GM12878 (cell line): ENCODE measurements at regions of chr1 and their contacts with region 1.

Region 1: DNA sequence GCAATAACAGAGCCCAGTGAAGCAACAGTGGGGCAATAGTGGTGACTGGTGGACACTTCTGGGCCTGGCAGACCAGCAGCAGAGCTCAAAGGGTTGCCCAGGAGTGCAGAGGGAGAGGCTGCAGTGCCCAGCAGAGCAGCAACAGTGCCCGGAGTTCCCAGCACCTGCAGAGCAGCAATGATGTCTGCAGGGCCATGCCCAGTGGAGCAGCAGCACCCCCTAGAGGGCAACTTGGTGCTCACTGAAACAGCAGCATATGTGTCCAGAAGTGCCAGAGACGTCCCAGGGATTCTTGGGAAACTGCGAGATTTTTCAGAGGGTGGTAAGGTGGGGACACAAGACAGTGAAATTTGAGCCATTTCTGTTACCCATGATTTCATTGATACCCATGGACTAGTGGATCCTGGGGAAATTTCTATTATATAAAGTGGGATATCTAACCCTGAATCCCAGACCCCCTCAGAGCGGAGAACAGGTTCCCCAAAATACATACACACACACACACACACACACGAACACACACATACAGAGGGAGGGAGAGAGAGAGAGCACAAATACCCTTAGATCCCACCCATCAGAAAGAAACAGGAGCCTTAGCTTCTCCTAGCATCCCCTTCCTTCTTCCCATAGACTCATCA is 156.9 kb upstream of the GJB5 start:
- DNase-seq: peak; percentile 41
- ATAC-seq: peak; percentile 96
- H3K4me3 ChIP-seq: no peak overlapping the region
- H3K27ac ChIP-seq: no peak overlapping the region
- H3K4me1 ChIP-seq: no peaks in the 10 kb centered on the region
- H3K27me3 ChIP-seq: no peaks in the 10 kb centered on the region
- CTCF ChIP-seq: peak; percentile 95 to 96 (median 96)
- EP300 ChIP-seq: no peak
- POLR2A ChIP-seq: no peak
- RAD21 ChIP-seq: peak; percentile 94

Region 2: DNA sequence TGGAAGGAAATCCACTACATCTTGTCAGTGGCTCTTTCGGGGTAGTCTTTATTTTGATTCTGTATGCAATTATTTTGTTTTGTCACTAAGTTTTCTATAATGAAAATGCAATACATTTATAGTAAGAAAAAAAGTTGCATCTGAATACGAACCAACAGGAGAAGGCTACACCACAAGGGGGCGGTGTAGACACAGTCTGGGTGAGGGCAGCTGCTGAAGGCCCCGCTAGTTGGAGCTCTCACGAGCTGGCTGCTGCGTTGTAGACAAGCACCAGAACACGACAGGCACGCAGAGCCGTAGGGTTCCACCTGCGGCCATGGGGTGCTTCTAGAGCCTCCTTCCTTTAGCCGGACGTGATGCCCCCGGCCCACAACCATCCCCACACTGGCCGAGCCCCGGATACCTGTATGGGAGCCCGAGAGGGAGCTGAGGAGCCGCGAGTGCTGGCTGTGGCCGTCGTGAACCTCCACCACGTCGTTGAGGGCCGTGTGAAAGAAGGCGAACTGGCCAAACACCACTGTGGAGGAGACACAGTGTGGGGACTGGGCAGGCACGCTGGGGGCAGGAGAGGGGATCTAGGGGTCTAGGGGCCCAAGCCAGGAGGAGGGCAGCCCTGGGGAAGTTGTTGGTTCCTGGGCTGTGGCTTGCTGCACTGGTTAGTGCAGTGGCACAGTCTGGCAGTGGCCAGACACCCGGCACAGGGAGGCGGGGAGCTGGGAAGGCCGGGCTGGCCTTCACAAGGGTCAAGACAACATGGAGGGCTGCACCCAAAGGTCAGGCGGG is 964.8 kb before region 1 on chr1:
- CTCF ChIA-PET with region 1: interaction called, 18 read pairs
- POLR2A ChIA-PET with region 1: no interaction called
- RAD21 ChIA-PET with region 1: interaction called, 3 read pairs
- SMC1A ChIA-PET with region 1: interaction called, 3 read pairs
- in situ Hi-C with region 1: loop called (anchors 10 kb)
- intact Hi-C with region 1: loop called (anchors 2 kb)
- DNase-seq: peak; percentile 24
- ATAC-seq: peak; percentile 97
- H3K4me3 ChIP-seq: no peak overlapping the region
- H3K27ac ChIP-seq: no peak overlapping the region
- H3K4me1 ChIP-seq: no peaks in the 10 kb centered on the region
- H3K27me3 ChIP-seq: peaks cover 0 to 4% of the 10 kb centered on the region in 2 experiments; a peak in 2 of 4 replicates
- CTCF ChIP-seq: peak; percentile 99; a peak in 5 of 6 replicates
- EP300 ChIP-seq: no peak
- POLR2A ChIP-seq: no peak
- RAD21 ChIP-seq: peak; percentile 64

Region 3: DNA sequence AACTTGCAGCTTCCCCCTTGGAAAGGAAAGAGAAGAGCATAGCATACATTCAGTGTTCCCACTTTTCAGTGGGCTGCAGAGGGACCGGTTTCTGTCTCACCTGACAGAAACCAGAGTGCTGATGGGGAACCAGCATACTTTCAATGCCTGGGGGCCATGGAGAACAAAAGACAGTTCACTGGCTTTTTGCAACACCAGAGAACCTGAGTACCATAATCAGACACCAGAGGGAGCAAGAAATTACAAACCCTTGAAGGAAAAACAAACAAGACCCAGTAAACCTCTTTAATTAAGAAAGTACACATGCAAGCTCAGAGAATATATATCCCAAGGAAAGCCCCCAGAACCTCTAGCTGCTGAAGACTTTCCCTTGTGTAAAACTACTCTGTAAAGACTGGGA is 484.1 kb before region 1 on chr1:
- CTCF ChIA-PET with region 1: interaction called, 21 read pairs
- POLR2A ChIA-PET with region 1: no interaction called
- RAD21 ChIA-PET with region 1: no interaction called
- SMC1A ChIA-PET with region 1: no interaction called
- in situ Hi-C with region 1: no loop called
- intact Hi-C with region 1: no loop called
- DNase-seq: no peak
- ATAC-seq: no peak
- H3K4me3 ChIP-seq: no peak overlapping the region
- H3K27ac ChIP-seq: no peak overlapping the region
- H3K4me1 ChIP-seq: no peaks in the 10 kb centered on the region; the same call in 1 of the 2 replicates
- H3K27me3 ChIP-seq: no peaks in the 10 kb centered on the region
- CTCF ChIP-seq: peak; percentile 31 to 41 (median 39); a peak in 4 of 6 replicates
- EP300 ChIP-seq: no peak
- POLR2A ChIP-seq: no peak
- RAD21 ChIP-seq: peak; percentile 37

Region 4: DNA sequence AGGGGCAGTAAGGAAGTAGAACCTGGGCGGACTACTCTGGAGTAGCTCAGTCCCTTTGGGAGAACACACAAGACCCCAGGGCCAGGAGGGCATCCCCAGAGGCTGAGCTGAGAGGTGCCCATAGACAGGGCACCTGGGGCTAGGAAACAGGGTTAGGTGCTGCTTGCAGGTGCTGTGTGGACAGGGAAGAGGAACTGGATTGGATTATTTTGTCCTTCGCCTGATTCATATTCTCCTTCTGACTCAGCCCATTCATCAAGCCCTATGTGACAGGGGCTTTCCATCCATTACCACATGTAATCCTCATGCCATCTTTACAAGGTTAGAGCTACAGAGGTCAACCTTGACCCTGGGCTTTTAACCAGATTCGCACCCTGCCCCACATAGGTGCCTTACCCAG is 237.4 kb before region 1 on chr1:
- CTCF ChIA-PET with region 1: interaction called, 3 read pairs
- POLR2A ChIA-PET with region 1: no interaction called
- RAD21 ChIA-PET with region 1: no interaction called
- SMC1A ChIA-PET with region 1: interaction called, 3 read pairs
- in situ Hi-C with region 1: no loop called
- intact Hi-C with region 1: loop called (anchors 10 kb)
- DNase-seq: peak; percentile 84
- ATAC-seq: peak; percentile 83
- H3K4me3 ChIP-seq: no peak overlapping the region
- H3K27ac ChIP-seq: peak overlapping the region; percentile 49
- H3K4me1 ChIP-seq: peaks cover 30% of the 10 kb centered on the region
- H3K27me3 ChIP-seq: no peaks in the 10 kb centered on the region
- CTCF ChIP-seq: no peak
- EP300 ChIP-seq: peak; percentile 81 to 97
- POLR2A ChIP-seq: no peak
- RAD21 ChIP-seq: no peak

Region 5: GRCh38 chr1:34460193-34460592 is 137.8 kb before region 1 on chr1:
- CTCF ChIA-PET with region 1: interaction called, 311 read pairs
- POLR2A ChIA-PET with region 1: interaction called, 3 read pairs
- RAD21 ChIA-PET with region 1: interaction called, 108 read pairs
- SMC1A ChIA-PET with region 1: interaction called, 203 read pairs
- in situ Hi-C with region 1: loop called (anchors 5 kb)
- intact Hi-C with region 1: loop called (anchors 1 kb)
- DNase-seq: peak; percentile 31
- ATAC-seq: peak; percentile 90
- H3K4me3 ChIP-seq: no peak overlapping the region
- H3K27ac ChIP-seq: no peak overlapping the region
- H3K4me1 ChIP-seq: no peaks in the 10 kb centered on the region; the same call in 1 of the 2 replicates
- H3K27me3 ChIP-seq: no peaks in the 10 kb centered on the region
- CTCF ChIP-seq: peak; percentile 74 to 84 (median 80)
- EP300 ChIP-seq: no peak
- POLR2A ChIP-seq: no peak
- RAD21 ChIP-seq: peak; percentile 80

Region 6: DNA sequence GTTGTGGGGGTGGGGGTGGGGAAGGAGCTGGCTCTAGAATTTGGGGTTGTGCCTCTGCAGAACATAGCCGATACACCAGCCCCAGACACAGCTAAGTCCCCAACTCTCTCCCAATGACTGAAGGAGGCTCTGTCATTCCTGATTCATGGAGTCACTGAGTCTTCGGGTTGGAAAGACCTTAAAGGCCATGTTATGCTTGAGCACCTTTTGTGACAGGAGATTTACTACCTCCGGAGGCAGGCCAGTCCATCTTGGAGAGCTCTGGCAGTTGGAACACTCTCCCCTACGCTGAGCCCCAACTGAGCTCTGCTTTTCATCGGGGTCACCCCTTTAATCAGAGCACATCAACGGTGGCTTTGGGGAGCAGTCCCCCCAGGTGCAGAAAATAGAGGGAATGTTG is 127.6 kb before region 1 on chr1:
- CTCF ChIA-PET with region 1: interaction called, 11 read pairs
- POLR2A ChIA-PET with region 1: no interaction called
- RAD21 ChIA-PET with region 1: interaction called, 4 read pairs
- SMC1A ChIA-PET with region 1: interaction called, 9 read pairs
- in situ Hi-C with region 1: no loop called
- intact Hi-C with region 1: no loop called
- DNase-seq: no peak
- ATAC-seq: no peak
- H3K4me3 ChIP-seq: no peak overlapping the region
- H3K27ac ChIP-seq: no peak overlapping the region
- H3K4me1 ChIP-seq: no peaks in the 10 kb centered on the region
- H3K27me3 ChIP-seq: peaks cover 0 to 2% of the 10 kb centered on the region in 2 experiments; a peak in 1 of 4 replicates
- CTCF ChIP-seq: no peak
- EP300 ChIP-seq: no peak
- POLR2A ChIP-seq: no peak
- RAD21 ChIP-seq: no peak

Region 7: DNA sequence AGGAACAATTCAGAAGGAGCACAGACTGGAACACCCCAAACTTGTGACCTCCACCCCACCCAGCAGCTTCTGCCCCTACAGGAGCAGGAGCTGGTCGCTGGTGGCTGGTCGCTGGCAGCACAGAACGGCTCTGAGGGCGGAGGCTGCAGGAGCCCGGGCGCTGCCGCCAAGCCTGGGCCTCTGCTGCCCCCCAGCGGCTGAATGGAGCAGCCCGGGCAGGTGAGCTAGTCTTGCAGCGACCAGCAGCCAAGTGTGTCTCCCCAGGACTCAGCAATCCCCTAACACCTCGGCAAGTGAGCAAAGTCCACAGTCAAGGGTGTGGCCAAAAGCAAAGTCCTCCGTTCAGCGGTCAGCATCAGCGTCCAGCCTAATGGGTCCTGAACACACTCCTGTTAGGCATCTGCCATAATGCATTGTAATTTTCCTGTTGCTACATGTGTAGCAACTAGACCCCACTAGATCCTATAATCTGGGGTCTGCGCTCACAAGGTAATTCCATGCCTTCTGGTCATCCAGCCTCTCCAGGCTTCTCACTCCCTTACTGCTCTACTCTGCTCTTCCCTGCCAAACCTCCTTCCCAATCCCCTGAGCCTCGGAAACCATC is 144.8 kb after region 1 on chr1:
- CTCF ChIA-PET with region 1: interaction called, 9 read pairs
- POLR2A ChIA-PET with region 1: no interaction called
- RAD21 ChIA-PET with region 1: interaction called, 3 read pairs
- SMC1A ChIA-PET with region 1: interaction called, 4 read pairs
- in situ Hi-C with region 1: no loop called
- intact Hi-C with region 1: loop called (anchors 2 kb)
- DNase-seq: peak; percentile 2
- ATAC-seq: peak; percentile 100
- H3K4me3 ChIP-seq: no peak overlapping the region
- H3K27ac ChIP-seq: no peak overlapping the region
- H3K4me1 ChIP-seq: no peaks in the 10 kb centered on the region
- H3K27me3 ChIP-seq: no peaks in the 10 kb centered on the region; a peak in 1 of 4 replicates
- CTCF ChIP-seq: peak; percentile 94 to 99 (median 94)
- EP300 ChIP-seq: no peak
- POLR2A ChIP-seq: no peak
- RAD21 ChIP-seq: peak; percentile 74